CD4-positive, alpha-beta T cell (primary cell): ENCODE measurements at regions of chr5 and their contacts with region 1.

Region 1: GRCh38 chr5:157189223-157189622 is 8.6 kb downstream of the ITK start:
- DNase-seq: peak in 1 of 14 experiments; percentile 42
- ATAC-seq: no peak
- H3K4me3 ChIP-seq: peak overlapping the region; percentile 85
- H3K4me3 Mint-ChIP-seq: peak overlapping the region; percentile 92
- H3K27ac ChIP-seq: peak overlapping the region; percentile 38 to 67
- H3K27ac Mint-ChIP-seq: peak overlapping the region; percentile 96
- H3K4me1 ChIP-seq: peaks cover 72% of the 10 kb centered on the region
- H3K4me1 Mint-ChIP-seq: peaks cover 92% of the 10 kb centered on the region
- H3K27me3 ChIP-seq: no peaks in the 10 kb centered on the region
- H3K27me3 Mint-ChIP-seq: no peaks in the 10 kb centered on the region
- CTCF ChIP-seq: no peak

Region 2: DNA sequence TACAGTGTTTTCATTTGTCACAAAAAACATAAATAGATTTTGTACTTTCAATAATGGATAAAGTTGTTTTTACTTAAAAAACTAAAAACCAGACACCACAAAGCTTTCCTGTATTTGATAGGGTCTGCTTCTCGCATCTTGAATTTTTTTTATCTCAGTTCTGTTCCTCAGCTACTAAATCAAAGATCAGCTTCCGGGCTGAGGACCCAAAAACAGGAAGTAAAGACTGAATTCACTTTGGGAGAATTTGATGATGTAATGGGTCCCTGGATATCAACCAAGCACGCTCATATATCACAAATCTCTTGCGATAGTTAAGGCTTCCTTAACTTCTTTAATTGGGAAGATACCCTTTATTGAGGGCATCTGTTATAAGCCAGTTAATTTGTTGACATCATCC is 15.5 kb after region 1 on chr5:
- CTCF ChIA-PET with region 1: interaction called, 4 read pairs
- POLR2A ChIA-PET with region 1: interaction called, 193 read pairs
- intact Hi-C with region 1: no loop called
- DNase-seq: peak in 4 of 14 experiments; percentile 46 to 80 (median 77)
- ATAC-seq: peak; percentile 56
- H3K4me3 ChIP-seq: no peak overlapping the region
- H3K4me3 Mint-ChIP-seq: peak overlapping the region; percentile 72
- H3K27ac ChIP-seq: peak overlapping the region; percentile 73 to 83
- H3K27ac Mint-ChIP-seq: peak overlapping the region; percentile 96
- H3K4me1 ChIP-seq: peaks cover 86% of the 10 kb centered on the region
- H3K4me1 Mint-ChIP-seq: peaks cover 92% of the 10 kb centered on the region
- H3K27me3 ChIP-seq: no peaks in the 10 kb centered on the region
- H3K27me3 Mint-ChIP-seq: no peaks in the 10 kb centered on the region
- CTCF ChIP-seq: no peak